ENCODE measurements at regions of chr22 and their contacts with region 1.

Region 1: GRCh38 chr22:24156913-24157821 is 24.1 kb upstream of the SUSD2 start:
- DNase-seq: peak; percentile 96
- H3K4me3 ChIP-seq: peak overlapping the region; percentile 74
- H3K27ac ChIP-seq: peak overlapping the region; percentile 81
- H3K4me1 ChIP-seq: peaks cover 46% of the 10 kb centered on the region
- CTCF ChIP-seq: peak; percentile 90

Region 2: DNA sequence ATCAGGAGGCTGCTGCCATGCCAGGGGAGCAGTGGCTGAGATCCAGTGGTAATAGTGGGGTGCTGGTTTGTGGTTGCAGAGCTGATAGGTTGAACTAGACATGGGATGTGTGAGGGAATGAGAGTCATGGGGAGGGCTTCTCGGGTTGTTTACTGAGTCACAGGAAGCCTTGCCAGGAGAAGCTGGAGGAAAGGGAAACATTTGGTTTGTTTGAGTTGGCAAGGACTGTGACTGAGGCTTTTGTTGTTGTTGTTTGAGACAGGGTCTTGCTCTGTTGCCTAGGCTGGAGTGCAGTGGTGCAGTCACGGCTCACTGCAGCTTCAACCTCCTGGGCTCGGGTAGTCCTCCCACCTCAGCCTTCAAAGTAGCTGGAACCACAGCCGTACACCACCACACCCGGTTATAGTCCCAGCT is 96.8 kb before region 1 on chr22:
- CTCF ChIA-PET with region 1: no interaction called
- POLR2A ChIA-PET with region 1: no interaction called
- intact Hi-C with region 1: loop called (anchors 10 kb)
- DNase-seq: no peak
- H3K4me3 ChIP-seq: no peak overlapping the region
- H3K27ac ChIP-seq: no peak overlapping the region
- H3K4me1 ChIP-seq: peaks cover 11% of the 10 kb centered on the region
- CTCF ChIP-seq: no peak

Region 3: GRCh38 chr22:24099666-24100065 is 57.5 kb before region 1 on chr22:
- CTCF ChIA-PET with region 1: no interaction called
- POLR2A ChIA-PET with region 1: no interaction called
- intact Hi-C with region 1: no loop called
- DNase-seq: no peak
- H3K4me3 ChIP-seq: no peak overlapping the region
- H3K27ac ChIP-seq: no peak overlapping the region
- H3K4me1 ChIP-seq: no peaks in the 10 kb centered on the region
- CTCF ChIP-seq: no peak

Region 4: GRCh38 chr22:24146194-24146616 is 11.0 kb before region 1 on chr22:
- CTCF ChIA-PET with region 1: no interaction called
- POLR2A ChIA-PET with region 1: interaction called, 14 read pairs
- intact Hi-C with region 1: no loop called
- DNase-seq: peak; percentile 83
- H3K4me3 ChIP-seq: peak overlapping the region; percentile 23
- H3K27ac ChIP-seq: peak overlapping the region; percentile 61
- H3K4me1 ChIP-seq: peaks cover 30% of the 10 kb centered on the region
- CTCF ChIP-seq: no peak

Measured in OCI-LY7 (cell line).